Sciatic nerve (tissue), 2 donors: ENCODE measurements at regions of chr5 and their contacts with region 1.

Region 1: GRCh38 chr5:105015098-105015497 is 1452.5 kb upstream of the NUDT12 start:
- DNase-seq: no peak
- ATAC-seq: no peak

Region 2: DNA sequence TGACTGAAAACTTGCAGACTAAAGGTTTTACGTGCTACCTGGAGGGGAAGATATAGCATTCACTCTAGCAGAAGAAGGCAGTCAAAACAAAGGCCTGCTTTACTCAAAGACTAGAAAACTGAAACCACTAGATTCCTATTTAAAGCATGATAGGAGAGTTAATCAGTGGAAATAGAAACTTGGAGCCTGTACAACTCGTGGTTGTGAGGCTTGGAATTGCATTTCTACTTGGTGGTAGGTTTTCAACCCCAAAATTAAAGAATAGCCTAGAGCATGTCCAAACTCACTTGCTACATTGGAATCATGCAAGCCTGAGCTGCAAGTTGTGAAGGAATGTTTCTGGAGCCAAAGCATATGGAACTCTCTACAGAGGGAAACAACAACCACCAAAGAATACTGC is 73.9 kb after region 1 on chr5:
- intact Hi-C with region 1: loop called (anchors 2 kb)
- DNase-seq: no peak
- ATAC-seq: no peak